ENCODE measurements at regions of chr12 and their contacts with region 1.

Region 1: GRCh38 chr12:69254046-69254445 is 14.7 kb downstream of the CPSF6 start:
- DNase-seq: peak in 7 of 9 donors; percentile 55 to 76 (median 67)
- ATAC-seq: peak; percentile 94
- H3K4me3 ChIP-seq: no peak overlapping the region
- H3K4me3 Mint-ChIP-seq: no peak overlapping the region
- H3K27ac ChIP-seq: peak overlapping the region; percentile 33
- H3K27ac Mint-ChIP-seq: peak overlapping the region; percentile 18 to 93 (median 53)
- H3K4me1 ChIP-seq: peaks cover 0 to 4% of the 10 kb centered on the region in 2 donors
- H3K4me1 Mint-ChIP-seq: peaks cover 19 to 56% (median 54%) of the 10 kb centered on the region in 7 donors
- H3K27me3 ChIP-seq: no peaks in the 10 kb centered on the region
- H3K27me3 Mint-ChIP-seq: no peaks in the 10 kb centered on the region

Region 2: GRCh38 chr12:68831272-68831671 is 422.8 kb before region 1 on chr12:
- CTCF ChIA-PET with region 1: interaction called, 4 read pairs
- POLR2A ChIA-PET with region 1: no interaction called
- intact Hi-C with region 1: loop called (anchors 2 to 10 kb)
- DNase-seq: no peak
- ATAC-seq: no peak
- H3K4me3 ChIP-seq: no peak overlapping the region
- H3K4me3 Mint-ChIP-seq: no peak overlapping the region
- H3K27ac ChIP-seq: no peak overlapping the region
- H3K27ac Mint-ChIP-seq: peak overlapping the region in 1 of 9 donors; percentile 62
- H3K4me1 ChIP-seq: no peaks in the 10 kb centered on the region
- H3K4me1 Mint-ChIP-seq: peaks cover 8 to 25% (median 20%) of the 10 kb centered on the region in 7 donors
- H3K27me3 ChIP-seq: no peaks in the 10 kb centered on the region
- H3K27me3 Mint-ChIP-seq: no peaks in the 10 kb centered on the region

Region 3: DNA sequence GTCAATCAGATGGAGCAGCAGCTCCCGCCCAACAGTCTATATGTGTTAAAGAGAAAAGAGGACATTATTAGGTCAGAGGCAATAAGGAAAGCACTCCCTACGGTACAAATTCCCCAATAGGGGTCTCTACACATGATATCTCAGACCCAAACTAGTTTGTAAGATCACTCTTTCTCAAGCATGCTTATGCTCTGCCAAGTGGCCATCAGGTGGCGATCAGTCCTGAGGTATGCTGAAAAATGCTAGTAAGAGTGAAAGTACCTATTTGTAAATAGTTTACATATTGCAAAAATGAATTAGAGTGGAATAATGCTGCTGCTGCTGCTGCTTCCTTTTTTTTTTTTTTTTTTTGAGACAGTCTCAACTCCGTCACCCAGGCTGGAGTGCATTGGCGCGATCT is 382.1 kb before region 1 on chr12:
- CTCF ChIA-PET with region 1: no interaction called
- POLR2A ChIA-PET with region 1: no interaction called
- intact Hi-C with region 1: loop called in 1 of 2 experiments (anchors 10 kb)
- DNase-seq: no peak
- ATAC-seq: peak; percentile 36
- H3K4me3 ChIP-seq: no peak overlapping the region
- H3K4me3 Mint-ChIP-seq: no peak overlapping the region
- H3K27ac ChIP-seq: no peak overlapping the region
- H3K27ac Mint-ChIP-seq: no peak overlapping the region
- H3K4me1 ChIP-seq: no peaks in the 10 kb centered on the region
- H3K4me1 Mint-ChIP-seq: peaks cover 0 to 12% (median 0%) of the 10 kb centered on the region in 7 donors
- H3K27me3 ChIP-seq: no peaks in the 10 kb centered on the region
- H3K27me3 Mint-ChIP-seq: peaks cover 0 to 6% (median 0%) of the 10 kb centered on the region in 5 donors

Region 4: DNA sequence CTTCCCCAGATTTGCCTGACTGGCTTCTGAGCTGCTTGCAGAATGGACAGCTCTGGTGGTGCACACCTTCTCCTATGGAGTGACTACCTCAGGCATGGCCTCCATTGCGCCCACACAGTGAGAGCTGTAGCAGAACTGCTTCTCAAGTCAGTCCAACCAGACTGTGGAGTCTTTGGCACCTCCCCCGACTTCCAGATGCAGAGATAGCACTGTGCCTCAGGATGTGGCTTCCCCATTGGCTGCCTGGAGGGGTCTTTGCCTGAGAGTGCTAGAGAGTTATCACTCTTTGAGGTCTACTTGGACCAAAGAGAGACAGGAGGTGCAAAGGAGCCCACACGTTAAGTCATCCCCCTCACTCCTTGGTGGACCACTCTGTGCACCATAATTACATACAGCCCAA is 171.4 kb after region 1 on chr12:
- CTCF ChIA-PET with region 1: no interaction called
- POLR2A ChIA-PET with region 1: no interaction called
- intact Hi-C with region 1: no loop called
- DNase-seq: no peak
- ATAC-seq: no peak
- H3K4me3 ChIP-seq: no peak overlapping the region
- H3K4me3 Mint-ChIP-seq: no peak overlapping the region
- H3K27ac ChIP-seq: no peak overlapping the region
- H3K27ac Mint-ChIP-seq: peak overlapping the region in 1 of 9 donors; percentile 56
- H3K4me1 ChIP-seq: no peaks in the 10 kb centered on the region
- H3K4me1 Mint-ChIP-seq: no peaks in the 10 kb centered on the region
- H3K27me3 ChIP-seq: no peaks in the 10 kb centered on the region
- H3K27me3 Mint-ChIP-seq: no peaks in the 10 kb centered on the region

Measured in naive thymus-derived CD4-positive, alpha-beta T cell (primary cell).